ENCODE measurements at regions of chr7 and their contacts with region 1.

Region 1: DNA sequence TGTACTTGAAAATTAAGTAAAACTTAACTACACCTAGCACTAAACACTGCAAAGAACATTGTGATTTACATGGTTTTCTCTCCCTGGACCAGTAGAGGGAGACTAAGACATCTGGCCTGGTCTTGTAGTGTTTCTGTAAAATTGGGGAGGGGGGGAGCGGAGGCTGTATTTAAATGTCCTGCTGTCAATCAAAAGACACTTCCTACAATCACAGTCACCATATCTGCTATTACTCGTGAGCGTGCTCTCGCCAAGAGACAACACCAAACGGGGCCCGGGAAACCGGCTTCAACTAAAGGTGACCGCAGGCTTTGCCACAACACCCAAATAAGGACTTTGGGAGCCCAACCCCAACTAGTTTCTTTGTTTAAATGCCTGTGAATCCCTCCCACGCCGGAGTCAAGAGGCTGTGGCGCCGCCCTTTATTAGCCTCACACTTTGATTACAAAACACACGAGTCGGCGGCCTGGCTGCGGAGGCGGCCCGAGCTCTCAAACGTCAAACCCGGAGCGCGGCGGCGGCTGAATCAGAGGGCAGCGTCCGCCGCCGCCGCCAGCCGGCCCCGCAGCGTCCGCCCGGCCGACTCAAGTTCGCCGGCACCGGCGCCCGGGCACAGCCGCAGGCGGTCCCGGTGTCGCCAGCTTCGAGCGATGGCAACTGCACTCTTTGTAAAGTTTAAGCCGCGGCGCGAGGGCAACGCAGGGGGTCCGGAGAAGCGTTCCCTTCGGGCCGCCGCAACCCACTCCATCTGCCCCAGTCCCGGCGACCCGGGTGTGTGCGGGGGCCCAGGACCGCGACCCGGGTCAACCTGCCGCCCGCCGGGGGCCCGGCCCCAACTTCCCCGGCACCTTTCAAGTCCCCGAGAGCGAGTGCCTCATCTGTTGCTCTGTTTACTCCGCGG is 1.3 kb downstream of the KDM7A start:
- DNase-seq: peak; percentile 93
- H3K4me3 Mint-ChIP-seq: peak overlapping the region; percentile 73
- H3K27ac Mint-ChIP-seq: peak overlapping the region; percentile 86
- H3K4me1 Mint-ChIP-seq: peaks cover 38% of the 10 kb centered on the region
- H3K27me3 Mint-ChIP-seq: no peaks in the 10 kb centered on the region

Region 2: GRCh38 chr7:139767561-139767982 is 407.9 kb before region 1 on chr7:
- intact Hi-C with region 1: loop called (anchors 5 kb)
- DNase-seq: peak; percentile 14
- H3K4me3 Mint-ChIP-seq: peak overlapping the region; percentile 66
- H3K27ac Mint-ChIP-seq: peak overlapping the region; percentile 78
- H3K4me1 Mint-ChIP-seq: peaks cover 70% of the 10 kb centered on the region
- H3K27me3 Mint-ChIP-seq: no peaks in the 10 kb centered on the region

Region 3: DNA sequence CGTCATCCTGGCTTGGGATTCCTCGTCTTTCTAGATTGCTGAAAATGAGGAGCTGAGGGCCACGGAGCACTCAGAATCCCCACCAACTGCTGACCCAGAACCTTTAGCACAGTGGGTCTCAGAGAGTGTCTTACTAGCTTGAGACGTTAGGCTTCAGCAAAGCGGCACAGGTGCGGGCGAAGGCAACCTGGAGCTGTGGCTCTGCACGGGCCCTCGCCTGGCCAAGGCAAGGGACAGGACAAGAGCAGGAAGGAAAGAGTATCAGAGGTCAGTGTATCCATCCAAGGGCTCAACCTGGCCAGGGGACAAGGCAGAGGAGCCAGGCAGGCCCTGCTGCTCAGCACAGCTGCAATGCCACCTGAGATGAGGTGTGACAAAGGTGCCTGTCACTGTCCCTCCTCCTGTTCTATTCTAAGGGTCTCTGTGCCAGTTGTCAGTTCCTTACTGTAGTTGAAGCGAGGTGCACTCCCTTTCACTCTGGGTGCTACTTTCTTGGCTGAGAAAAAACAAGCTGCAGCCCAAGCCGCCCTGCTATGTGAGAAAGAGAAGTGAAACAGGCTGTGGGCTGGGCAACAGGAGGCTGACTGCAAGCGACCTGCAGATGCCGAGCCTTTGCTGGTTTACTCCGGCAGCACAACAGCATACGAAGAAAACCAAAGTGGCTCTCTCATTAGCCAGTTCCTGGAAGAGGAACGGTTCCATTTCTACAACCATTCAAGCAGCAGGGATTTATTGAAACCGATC is 34.6 kb after region 1 on chr7:
- intact Hi-C with region 1: loop called (anchors 1 kb)
- DNase-seq: peak; percentile 62
- H3K4me3 Mint-ChIP-seq: peak overlapping the region; percentile 49
- H3K27ac Mint-ChIP-seq: peak overlapping the region; percentile 70
- H3K4me1 Mint-ChIP-seq: peaks cover 61% of the 10 kb centered on the region
- H3K27me3 Mint-ChIP-seq: peaks cover 3% of the 10 kb centered on the region

Region 4: GRCh38 chr7:140249036-140249806 is 73.8 kb after region 1 on chr7:
- intact Hi-C with region 1: loop called (anchors 1 kb)
- DNase-seq: no peak
- H3K4me3 Mint-ChIP-seq: no peak overlapping the region
- H3K27ac Mint-ChIP-seq: no peak overlapping the region
- H3K4me1 Mint-ChIP-seq: peaks cover 25% of the 10 kb centered on the region
- H3K27me3 Mint-ChIP-seq: no peaks in the 10 kb centered on the region

Region 5: DNA sequence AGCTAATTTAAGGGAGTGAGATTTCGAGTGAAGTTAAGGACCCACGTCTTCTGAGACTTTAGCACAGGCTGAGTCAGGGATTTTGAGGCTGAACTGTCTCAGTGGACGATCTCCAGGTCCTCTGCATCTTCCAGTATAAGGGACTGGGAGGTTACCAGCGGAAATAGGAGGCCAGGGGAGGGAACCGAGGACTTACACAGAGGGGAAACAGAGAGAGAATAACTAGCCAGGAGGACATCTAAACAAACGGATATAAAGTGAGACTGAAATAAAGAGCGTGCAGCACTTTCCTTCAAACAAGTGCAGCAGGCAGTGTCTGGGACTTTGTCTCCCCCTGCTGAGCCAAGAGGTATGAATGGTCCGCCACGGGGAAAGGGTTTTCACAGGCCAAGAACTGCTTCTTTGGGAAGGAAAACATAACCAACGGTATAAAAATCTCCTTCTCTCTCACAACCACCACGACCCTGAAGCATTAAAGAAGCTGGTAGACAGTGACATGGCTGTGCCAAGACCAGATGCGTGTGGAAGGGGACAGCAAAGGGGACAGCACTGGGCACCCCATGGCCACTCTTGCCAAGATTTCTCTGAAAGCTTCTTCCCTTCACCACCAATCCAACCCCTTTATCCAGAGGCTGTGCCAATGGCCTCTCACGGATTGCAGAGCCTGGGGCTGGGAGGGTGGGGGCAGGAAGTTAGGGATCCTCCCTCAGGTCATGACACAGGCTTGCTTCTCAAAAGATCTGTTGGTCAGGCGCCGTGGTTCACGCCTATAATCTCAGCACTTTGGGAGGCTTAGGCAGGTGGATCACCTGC is 150.9 kb after region 1 on chr7:
- intact Hi-C with region 1: loop called (anchors 1 kb)
- DNase-seq: peak; percentile 47
- H3K4me3 Mint-ChIP-seq: no peak overlapping the region
- H3K27ac Mint-ChIP-seq: peak overlapping the region; percentile 28
- H3K4me1 Mint-ChIP-seq: peaks cover 1% of the 10 kb centered on the region
- H3K27me3 Mint-ChIP-seq: no peaks in the 10 kb centered on the region

Region 6: DNA sequence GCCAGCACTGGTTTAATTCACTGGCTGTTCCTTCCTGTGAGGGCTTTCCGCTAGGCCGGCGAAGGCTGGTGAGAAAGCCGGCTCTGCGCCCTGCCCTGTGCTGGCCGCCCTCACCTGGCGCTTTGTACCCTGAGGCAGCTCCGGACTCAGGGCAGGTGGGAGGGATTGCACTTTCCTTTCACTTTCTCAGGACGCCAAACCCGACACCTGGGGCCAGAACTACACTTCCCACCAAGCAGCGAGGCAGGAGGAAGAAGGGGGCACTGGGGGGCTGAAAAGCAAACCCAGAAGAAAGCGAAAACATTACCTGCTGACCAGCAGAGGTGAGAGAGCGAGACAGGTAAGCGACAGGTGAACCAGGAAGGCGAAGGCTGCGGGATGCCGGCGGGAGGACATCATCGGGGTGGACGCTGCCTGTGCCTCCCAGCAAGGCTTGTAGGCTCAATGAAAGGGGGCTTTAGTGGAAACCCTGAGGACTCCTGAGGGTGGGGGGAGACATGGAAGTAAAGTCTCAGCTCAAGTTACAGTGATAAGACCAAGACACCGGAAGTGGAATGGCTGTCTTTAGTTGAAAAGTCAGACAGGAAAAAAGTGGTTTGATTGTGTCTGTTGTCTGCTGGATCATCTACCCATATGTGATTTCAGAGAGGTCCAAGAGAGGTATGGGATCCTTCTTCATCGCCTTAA is 228.6 kb after region 1 on chr7 and contains the start of gene RAB19:
- intact Hi-C with region 1: loop called (anchors 5 kb)
- DNase-seq: peak; percentile 43
- H3K4me3 Mint-ChIP-seq: peak within 1 kb of the TSS; percentile 92
- H3K27ac Mint-ChIP-seq: peak within 1 kb of the TSS; percentile 95
- H3K4me1 Mint-ChIP-seq: peaks cover 42% of the 10 kb centered on the region
- H3K27me3 Mint-ChIP-seq: no peaks in the 10 kb centered on the region
- total RNA-seq, gene RAB19: 12.5 and 14.5 TPM in 2 replicates

Measured in activated T-helper 2 cell treated with anti-CD3 and anti-CD28 coated beads, Interferon-gamma antibody, Interleukin-2, Interleukin-4, amounts not matched to agents 10 μg/mL and 5 μg/mL and 100 μg/mL, durations not matched to agents 14 hours and 24 hours and 36 hours (primary cell).